Activated naive CD8-positive, alpha-beta T cell treated with anti-CD3 and anti-CD28 coated beads, Interleukin-2, amount 10 ng/mL, durations not matched to agents 7 days and 5 days (primary cell): ENCODE measurements at regions of chr22 and their contacts with region 1.

Region 1: DNA sequence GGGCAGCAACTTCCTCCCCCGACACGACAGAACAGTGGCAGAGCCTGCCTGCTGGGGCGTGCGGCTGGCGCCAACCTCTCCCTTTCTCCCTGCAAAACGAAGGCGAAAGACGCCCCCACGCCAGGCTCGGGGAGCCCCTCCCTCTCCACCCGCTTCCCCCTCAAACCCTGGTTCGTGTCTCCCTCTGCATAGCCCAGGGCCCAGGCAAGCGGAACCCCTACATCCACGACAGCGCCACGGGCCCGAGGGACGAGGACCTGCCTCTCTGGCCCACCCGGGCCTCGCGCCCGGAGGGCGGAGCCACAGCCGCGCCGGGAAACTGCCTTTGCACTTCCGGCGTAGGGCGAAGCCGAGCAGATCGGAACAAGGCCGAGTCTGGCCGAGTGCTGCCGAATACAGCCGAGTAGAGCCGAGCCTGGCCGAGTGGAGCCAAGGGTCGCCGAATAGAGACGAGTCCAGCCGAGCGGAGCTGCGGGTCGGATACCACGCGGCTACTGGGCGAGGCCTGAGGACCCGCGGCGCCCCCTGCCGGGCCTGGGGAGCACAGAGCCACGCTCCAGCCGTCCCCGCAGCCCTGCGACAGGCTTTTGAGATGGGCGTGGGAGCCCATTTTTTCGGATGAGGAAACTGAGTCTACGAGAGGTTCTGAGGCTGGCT is 11.2 kb upstream of the C1QTNF6 start:
- DNase-seq: peak; percentile 100
- ATAC-seq: peak; percentile 97
- H3K4me3 Mint-ChIP-seq: peak overlapping the region; percentile 81
- H3K27ac Mint-ChIP-seq: peak overlapping the region; percentile 97
- H3K4me1 Mint-ChIP-seq: peaks cover 37% of the 10 kb centered on the region
- H3K27me3 Mint-ChIP-seq: no peaks in the 10 kb centered on the region

Region 2: GRCh38 chr22:37032546-37033460 is 166.4 kb before region 1 on chr22:
- POLR2A ChIA-PET with region 1: no interaction called
- DNase-seq: no peak
- ATAC-seq: no peak
- H3K4me3 Mint-ChIP-seq: no peak overlapping the region
- H3K27ac Mint-ChIP-seq: no peak overlapping the region
- H3K4me1 Mint-ChIP-seq: no peaks in the 10 kb centered on the region
- H3K27me3 Mint-ChIP-seq: peaks cover 18% of the 10 kb centered on the region

Region 3: DNA sequence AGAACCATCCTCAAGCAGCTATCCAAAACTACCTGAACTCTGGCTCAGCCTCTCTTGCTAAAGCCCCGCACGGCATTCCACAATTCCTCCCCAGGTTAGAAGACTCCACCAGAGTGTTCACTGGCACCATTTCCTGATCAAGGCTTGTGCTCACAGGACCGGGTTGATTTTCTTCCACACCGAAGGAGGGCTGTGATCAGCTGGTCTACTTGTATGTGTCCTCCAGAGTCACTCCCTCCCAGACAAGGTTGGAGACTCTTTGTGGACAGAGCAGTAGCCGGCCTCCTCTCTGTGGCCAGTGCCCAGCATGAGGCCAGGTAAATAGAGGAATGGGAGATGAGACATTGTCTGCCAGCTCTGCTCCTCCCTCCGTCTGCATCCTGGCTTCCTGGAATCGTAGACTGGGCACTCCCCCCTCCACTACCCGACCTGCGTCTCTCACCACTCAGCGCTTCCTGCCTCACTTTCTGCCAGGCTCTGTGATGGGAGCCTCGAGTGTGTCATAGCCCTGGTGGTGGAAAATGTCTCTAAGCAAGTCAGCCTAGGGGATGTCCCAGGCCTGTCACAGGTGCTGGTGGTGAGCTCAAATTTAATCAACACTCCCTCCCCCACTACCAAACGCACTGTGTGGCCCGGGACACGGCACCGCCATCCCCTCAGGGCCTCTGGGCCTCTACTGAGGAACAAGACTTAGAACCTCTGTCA is 77.2 kb before region 1 on chr22:
- POLR2A ChIA-PET with region 1: interaction called, 15 read pairs
- DNase-seq: peak; percentile 82
- ATAC-seq: peak; percentile 98
- H3K4me3 Mint-ChIP-seq: peak overlapping the region; percentile 85
- H3K27ac Mint-ChIP-seq: peak overlapping the region; percentile 98
- H3K4me1 Mint-ChIP-seq: peaks cover 64% of the 10 kb centered on the region
- H3K27me3 Mint-ChIP-seq: no peaks in the 10 kb centered on the region

Region 4: GRCh38 chr22:37186228-37186996 is 12.8 kb before region 1 on chr22:
- POLR2A ChIA-PET with region 1: interaction called, 10 read pairs
- DNase-seq: peak; percentile 65
- ATAC-seq: peak; percentile 85
- H3K4me3 Mint-ChIP-seq: peak overlapping the region; percentile 71
- H3K27ac Mint-ChIP-seq: peak overlapping the region; percentile 90
- H3K4me1 Mint-ChIP-seq: peaks cover 46% of the 10 kb centered on the region
- H3K27me3 Mint-ChIP-seq: no peaks in the 10 kb centered on the region

Region 5: GRCh38 chr22:37218771-37219411 is 19.7 kb after region 1 on chr22:
- POLR2A ChIA-PET with region 1: interaction called, 43 read pairs
- DNase-seq: peak; percentile 64
- ATAC-seq: peak; percentile 70
- H3K4me3 Mint-ChIP-seq: peak overlapping the region; percentile 92
- H3K27ac Mint-ChIP-seq: peak overlapping the region; percentile 93
- H3K4me1 Mint-ChIP-seq: peaks cover 68% of the 10 kb centered on the region
- H3K27me3 Mint-ChIP-seq: no peaks in the 10 kb centered on the region